MCF 10A (cell line): ENCODE measurements at regions of chr6 and their contacts with region 1.

Region 1: DNA sequence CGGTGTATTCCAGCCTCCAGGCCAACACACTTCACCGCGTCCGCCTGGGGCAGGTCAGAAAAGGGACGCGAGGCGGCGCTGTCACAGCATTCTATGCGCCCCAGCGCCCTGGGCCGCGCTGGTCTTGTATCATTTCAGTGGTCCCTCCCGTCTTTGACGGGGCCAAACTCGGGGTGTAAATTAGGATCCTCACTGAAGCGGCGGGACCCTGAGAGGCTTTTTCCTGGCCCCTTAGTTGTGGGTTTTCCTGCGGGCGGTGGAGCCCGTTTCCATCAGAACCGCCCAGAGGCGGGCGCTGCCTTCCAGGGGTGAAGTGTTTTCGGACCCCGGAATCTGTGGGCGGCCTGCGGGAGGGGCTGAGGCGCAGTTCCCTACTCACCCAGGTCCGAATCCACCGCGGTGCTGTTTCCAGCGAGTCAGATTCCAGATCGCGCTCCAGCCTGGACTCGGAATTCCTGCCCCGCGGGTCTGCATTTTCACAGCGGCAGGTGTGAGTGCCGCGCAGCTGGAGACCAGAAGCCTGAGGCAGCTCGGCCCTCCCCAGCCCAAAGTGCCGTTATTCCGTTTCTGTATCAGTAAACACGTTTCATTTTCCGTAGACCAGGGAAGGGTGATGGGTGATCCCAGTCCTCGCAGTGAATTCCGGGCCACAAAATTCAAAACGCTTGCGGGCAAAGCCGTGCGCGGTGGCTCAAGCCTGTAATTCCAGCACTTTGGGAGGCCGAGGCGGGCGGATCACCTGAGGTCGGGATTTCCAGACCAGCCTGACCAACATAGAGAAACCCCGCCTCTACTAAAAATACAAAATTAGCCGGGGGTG is 3.9 kb upstream of the MICB start:
- DNase-seq: peak; percentile 86
- H3K4me3 Mint-ChIP-seq: peak overlapping the region; percentile 64
- H3K27ac Mint-ChIP-seq: peak overlapping the region; percentile 37
- H3K4me1 Mint-ChIP-seq: peaks cover 36% of the 10 kb centered on the region
- H3K27me3 Mint-ChIP-seq: no peaks in the 10 kb centered on the region
- CTCF ChIP-seq: peak; percentile 81

Region 2: GRCh38 chr6:31163922-31164321 is 330.2 kb before region 1 on chr6:
- CTCF ChIA-PET with region 1: no interaction called
- POLR2A ChIA-PET with region 1: no interaction called
- intact Hi-C with region 1: no loop called
- DNase-seq: peak; percentile 71
- H3K4me3 Mint-ChIP-seq: no peak overlapping the region
- H3K27ac Mint-ChIP-seq: no peak overlapping the region
- H3K4me1 Mint-ChIP-seq: peaks cover 11% of the 10 kb centered on the region
- H3K27me3 Mint-ChIP-seq: no peaks in the 10 kb centered on the region
- CTCF ChIP-seq: no peak

Region 3: DNA sequence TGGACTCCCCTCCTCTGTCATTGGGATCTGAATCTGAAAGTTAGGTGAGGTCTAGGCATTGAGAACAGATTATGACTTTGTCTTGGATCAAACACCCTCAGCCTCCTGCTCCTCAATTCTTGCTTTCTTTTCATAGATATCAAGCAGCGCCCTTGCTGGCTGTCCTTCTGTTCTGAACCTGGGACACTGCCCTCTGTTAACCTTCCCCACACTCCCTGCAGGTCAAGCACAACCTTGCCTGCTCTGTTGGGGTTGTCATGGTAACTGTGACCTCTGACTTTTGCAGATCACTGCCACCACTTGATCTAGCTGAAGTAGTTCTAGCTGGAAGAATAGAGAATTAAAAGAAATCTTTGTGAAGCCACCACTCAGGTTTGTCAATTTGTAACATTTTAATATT is 107.1 kb before region 1 on chr6:
- CTCF ChIA-PET with region 1: no interaction called
- POLR2A ChIA-PET with region 1: no interaction called
- intact Hi-C with region 1: no loop called
- DNase-seq: no peak
- H3K4me3 Mint-ChIP-seq: no peak overlapping the region
- H3K27ac Mint-ChIP-seq: no peak overlapping the region
- H3K4me1 Mint-ChIP-seq: peaks cover 15% of the 10 kb centered on the region
- H3K27me3 Mint-ChIP-seq: no peaks in the 10 kb centered on the region
- CTCF ChIP-seq: no peak

Region 4: GRCh38 chr6:31399589-31400466 is 94.3 kb before region 1 on chr6:
- CTCF ChIA-PET with region 1: interaction called, 5 read pairs
- POLR2A ChIA-PET with region 1: interaction called, 19 read pairs
- intact Hi-C with region 1: loop called (anchors 2 kb)
- DNase-seq: peak; percentile 93
- H3K4me3 Mint-ChIP-seq: peak overlapping the region; percentile 73
- H3K27ac Mint-ChIP-seq: peak overlapping the region; percentile 83
- H3K4me1 Mint-ChIP-seq: peaks cover 24% of the 10 kb centered on the region
- H3K27me3 Mint-ChIP-seq: no peaks in the 10 kb centered on the region
- CTCF ChIP-seq: peak; percentile 93

Region 5: GRCh38 chr6:31546962-31547726 is 53.1 kb after region 1 on chr6 and contains the start of gene NFKBIL1:
- CTCF ChIA-PET with region 1: interaction called, 8 read pairs
- POLR2A ChIA-PET with region 1: interaction called, 173 read pairs
- intact Hi-C with region 1: loop called (anchors 1 kb)
- DNase-seq: peak; percentile 96
- H3K4me3 Mint-ChIP-seq: peak within 1 kb of the TSS; percentile 75
- H3K27ac Mint-ChIP-seq: peak within 1 kb of the TSS; percentile 57
- H3K4me1 Mint-ChIP-seq: peaks cover 18% of the 10 kb centered on the region
- H3K27me3 Mint-ChIP-seq: no peaks in the 10 kb centered on the region
- CTCF ChIP-seq: no peak
- total RNA-seq, gene NFKBIL1: 25.2 and 30.3 TPM in 2 replicates

Region 6: GRCh38 chr6:32224696-32225095 is 730.6 kb after region 1 on chr6:
- CTCF ChIA-PET with region 1: no interaction called
- POLR2A ChIA-PET with region 1: no interaction called
- intact Hi-C with region 1: no loop called
- DNase-seq: no peak
- H3K4me3 Mint-ChIP-seq: no peak overlapping the region
- H3K27ac Mint-ChIP-seq: no peak overlapping the region
- H3K4me1 Mint-ChIP-seq: peaks cover 5% of the 10 kb centered on the region
- H3K27me3 Mint-ChIP-seq: peaks cover 27% of the 10 kb centered on the region
- CTCF ChIP-seq: no peak